Posterior cingulate gyrus (tissue), 11 donors: ENCODE measurements at regions of chr9 and their contacts with region 1.

Region 1: GRCh38 chr9:127224178-127224882 is 40.2 kb upstream of the GARNL3 start:
- DNase-seq: peak; percentile 82 to 98 (median 89)

Region 2: DNA sequence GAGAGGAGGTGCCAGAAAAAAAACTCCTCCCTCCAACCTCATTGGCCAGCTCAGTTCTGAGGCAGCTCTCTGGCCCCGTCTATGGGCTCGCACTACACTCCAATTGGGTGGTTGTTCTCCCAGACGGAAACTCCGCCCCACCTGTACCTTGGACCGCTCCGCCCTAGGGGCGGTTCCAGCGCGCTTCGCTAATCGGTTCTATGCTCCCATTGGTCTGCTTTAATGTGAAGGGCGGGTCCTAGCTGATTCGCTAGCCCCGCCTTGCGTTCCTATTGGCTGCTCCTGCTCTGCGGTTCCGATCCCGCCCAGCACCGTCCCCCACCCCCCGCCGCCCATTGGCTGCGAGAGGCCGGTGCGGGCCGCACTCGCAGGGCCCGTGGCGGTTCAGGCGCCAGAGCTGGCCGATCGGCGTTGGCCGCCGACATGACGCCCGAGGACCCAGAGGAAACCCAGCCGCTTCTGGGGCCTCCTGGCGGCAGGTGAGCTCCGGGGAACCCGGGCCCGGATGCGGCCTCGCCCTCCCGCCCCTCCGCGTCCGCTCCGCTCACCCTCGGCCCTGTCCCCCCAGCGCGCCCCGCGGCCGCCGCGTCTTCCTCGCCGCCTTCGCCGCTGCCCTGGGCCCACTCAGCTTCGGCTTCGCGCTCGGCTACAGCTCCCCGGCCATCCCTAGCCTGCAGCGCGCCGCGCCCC is 172.6 kb after region 1 on chr9 and contains the start of gene SLC2A8:
- intact Hi-C with region 1: loop called (anchors 5 kb)
- DNase-seq: peak; percentile 98 to 100 (median 99)

Region 3: DNA sequence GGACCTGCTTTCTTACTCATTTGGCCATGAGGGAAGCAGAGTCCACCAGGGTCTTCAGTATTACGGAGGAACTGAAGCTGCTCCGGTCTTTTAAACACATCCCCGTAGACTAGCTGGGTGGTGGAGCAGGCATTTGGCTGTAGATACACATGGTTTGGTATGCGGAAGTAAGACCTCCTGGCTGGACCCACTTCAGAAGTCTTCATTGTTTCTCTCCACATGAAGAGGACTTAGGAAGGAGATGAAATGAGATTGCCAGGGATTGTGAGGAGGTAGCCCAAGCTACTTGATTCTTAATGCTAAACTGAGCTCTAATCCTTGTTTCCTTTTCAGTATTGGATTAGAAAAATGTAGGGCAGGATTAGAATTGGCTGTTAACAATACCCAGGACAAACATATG is 420.6 kb after region 1 on chr9:
- intact Hi-C with region 1: no loop called
- DNase-seq: no peak